ENCODE measurements at regions of chr18 and their contacts with region 1.

Region 1: GRCh38 chr18:9614401-9615279 is at the start of gene PPP4R1:
- DNase-seq: peak; percentile 84
- ATAC-seq: peak; percentile 57
- H3K4me3 Mint-ChIP-seq: peak within 1 kb of the TSS; percentile 93
- H3K27ac Mint-ChIP-seq: peak within 1 kb of the TSS; percentile 79
- H3K4me1 Mint-ChIP-seq: peaks cover 29% of the 10 kb centered on the region
- H3K27me3 Mint-ChIP-seq: no peaks in the 10 kb centered on the region
- total RNA-seq, gene PPP4R1: 32.2 to 33.3 TPM

Region 2: DNA sequence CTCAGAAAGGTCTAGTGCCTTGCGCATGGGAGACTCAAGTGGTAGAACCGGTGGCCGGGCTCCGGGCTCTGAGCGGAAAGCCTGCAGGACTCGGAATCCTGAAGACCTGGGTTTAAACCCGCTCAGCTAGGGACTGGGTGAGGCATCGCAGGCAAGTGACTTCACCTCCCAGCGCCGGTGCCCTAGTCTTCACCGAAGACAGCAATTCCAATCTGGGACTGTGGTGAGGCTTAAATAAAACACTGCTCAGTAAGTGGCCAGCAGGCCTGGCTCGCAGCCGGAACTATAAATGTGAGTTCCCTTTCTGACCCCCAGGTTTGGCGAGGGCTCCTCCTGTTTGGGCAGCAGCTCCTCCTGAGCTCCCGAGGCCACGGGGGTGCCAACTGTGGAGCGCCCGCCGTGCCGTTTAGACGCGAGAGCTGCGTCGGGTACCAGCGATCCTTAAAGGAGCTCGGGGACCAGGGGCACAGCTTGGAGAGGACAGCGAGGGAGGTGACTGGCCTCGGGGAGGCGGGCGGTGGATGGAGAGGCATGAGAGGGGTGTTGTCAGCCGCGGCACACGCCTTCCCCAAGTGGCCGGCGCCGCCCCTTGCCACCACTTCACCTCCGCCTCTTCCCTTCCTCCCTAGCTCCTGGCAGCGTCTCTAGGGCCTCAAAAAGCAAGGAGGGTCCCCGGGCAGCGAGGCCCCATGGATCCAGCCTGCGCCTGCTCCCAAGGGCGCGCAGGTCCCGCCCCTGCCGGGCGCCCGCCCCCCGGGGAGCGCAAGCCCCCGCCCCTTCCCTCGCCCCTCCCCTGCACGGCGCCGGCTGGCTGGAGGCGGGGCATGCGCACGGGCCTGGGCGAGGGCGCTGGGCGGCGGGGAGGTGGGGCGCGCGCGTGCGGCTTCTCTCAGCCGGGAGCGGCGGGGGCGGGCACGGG is 910.0 kb before region 1 on chr18:
- CTCF ChIA-PET with region 1: interaction called, 3 read pairs
- POLR2A ChIA-PET with region 1: no interaction called
- intact Hi-C with region 1: loop called in 1 of 2 experiments (anchors 1 kb)
- DNase-seq: peak; percentile 90
- ATAC-seq: peak; percentile 98
- H3K4me3 Mint-ChIP-seq: peak overlapping the region; percentile 80
- H3K27ac Mint-ChIP-seq: no peak overlapping the region
- H3K4me1 Mint-ChIP-seq: peaks cover 12% of the 10 kb centered on the region
- H3K27me3 Mint-ChIP-seq: peaks cover 47% of the 10 kb centered on the region

Region 3: GRCh38 chr18:9102508-9103375 is 511.9 kb before region 1 on chr18 and contains the start of gene NDUFV2:
- CTCF ChIA-PET with region 1: no interaction called
- POLR2A ChIA-PET with region 1: no interaction called
- intact Hi-C with region 1: loop called in 1 of 2 experiments (anchors 5 kb)
- DNase-seq: peak; percentile 99
- ATAC-seq: peak; percentile 88
- H3K4me3 Mint-ChIP-seq: peak within 1 kb of the TSS; percentile 89
- H3K27ac Mint-ChIP-seq: peak within 1 kb of the TSS; percentile 97
- H3K4me1 Mint-ChIP-seq: peaks cover 40% of the 10 kb centered on the region
- H3K27me3 Mint-ChIP-seq: no peaks in the 10 kb centered on the region
- total RNA-seq, gene NDUFV2: 331 to 372 TPM

Region 4: GRCh38 chr18:9673296-9674251 is 58.9 kb after region 1 on chr18:
- CTCF ChIA-PET with region 1: interaction called, 3 read pairs
- POLR2A ChIA-PET with region 1: interaction called, 3 read pairs
- intact Hi-C with region 1: loop called (anchors 2 to 5 kb)
- DNase-seq: peak; percentile 55
- ATAC-seq: peak; percentile 85
- H3K4me3 Mint-ChIP-seq: no peak overlapping the region
- H3K27ac Mint-ChIP-seq: no peak overlapping the region
- H3K4me1 Mint-ChIP-seq: peaks cover 9% of the 10 kb centered on the region
- H3K27me3 Mint-ChIP-seq: peaks cover 8% of the 10 kb centered on the region

Region 5: DNA sequence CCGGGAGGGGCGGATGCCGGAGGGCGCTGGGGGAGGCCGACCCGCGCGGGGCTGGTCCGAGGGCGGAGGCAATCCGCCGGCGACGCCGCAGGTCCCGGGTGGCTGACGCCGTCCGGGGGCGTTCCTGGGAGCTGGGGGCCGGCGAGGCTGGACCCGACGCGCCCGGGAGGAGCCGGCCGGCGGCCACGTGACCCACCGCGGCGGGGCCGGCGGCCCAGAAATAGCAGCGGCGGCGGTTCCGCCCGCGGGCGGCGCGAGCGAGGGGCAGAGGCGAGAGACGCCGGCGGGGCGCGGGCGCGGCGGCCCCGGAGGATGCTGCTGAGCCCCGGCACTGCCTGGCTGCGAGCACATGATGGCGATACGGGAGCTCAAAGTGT is 93.4 kb after region 1 on chr18 and contains the start of gene RAB31:
- CTCF ChIA-PET with region 1: no interaction called
- POLR2A ChIA-PET with region 1: no interaction called
- intact Hi-C with region 1: loop called (anchors 2 kb)
- DNase-seq: peak; percentile 47
- ATAC-seq: peak; percentile 34
- H3K4me3 Mint-ChIP-seq: peak within 1 kb of the TSS; percentile 76
- H3K27ac Mint-ChIP-seq: no peak within 1 kb of the TSS
- H3K4me1 Mint-ChIP-seq: peaks cover 42% of the 10 kb centered on the region
- H3K27me3 Mint-ChIP-seq: peaks cover 71% of the 10 kb centered on the region
- total RNA-seq, gene RAB31: 0.48 to 1.8 TPM

Region 6: DNA sequence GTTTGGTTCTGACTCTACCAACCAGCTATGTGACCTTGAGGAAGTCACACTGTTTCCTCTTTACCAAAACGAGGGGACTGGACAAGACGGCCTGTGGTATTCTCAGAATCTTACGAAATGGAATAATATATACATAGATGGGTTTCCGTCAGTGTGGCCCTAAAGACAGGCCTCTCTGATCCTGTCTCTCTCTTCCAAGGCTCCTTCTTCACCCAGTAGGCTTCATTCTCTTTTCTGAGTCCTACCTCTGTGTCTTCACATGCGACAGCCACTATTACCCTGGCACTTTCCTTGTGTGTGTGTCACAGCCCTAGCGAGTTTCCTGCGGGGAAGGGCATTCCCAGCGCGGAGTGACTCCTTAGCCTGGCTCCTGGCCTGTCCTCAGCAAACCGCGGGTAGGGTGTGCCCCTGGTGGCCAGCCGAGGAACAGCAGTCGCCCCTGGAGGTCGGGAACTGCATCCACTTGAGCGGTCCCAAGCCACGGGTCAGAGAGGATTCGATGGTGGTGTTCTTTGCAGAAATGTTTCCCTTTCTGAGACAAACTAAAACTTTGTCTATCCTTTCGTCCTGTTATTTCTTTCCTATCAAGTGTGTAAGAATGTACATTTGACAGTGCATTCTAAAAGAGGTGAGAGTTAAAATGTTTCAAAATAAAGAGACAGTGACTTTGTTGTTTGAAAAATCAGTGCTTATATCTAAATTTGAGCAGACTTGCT is 156.8 kb after region 1 on chr18:
- CTCF ChIA-PET with region 1: no interaction called
- POLR2A ChIA-PET with region 1: no interaction called
- intact Hi-C with region 1: loop called in 1 of 2 experiments (anchors 2 kb)
- DNase-seq: peak; percentile 80
- ATAC-seq: peak; percentile 79
- H3K4me3 Mint-ChIP-seq: no peak overlapping the region
- H3K27ac Mint-ChIP-seq: no peak overlapping the region
- H3K4me1 Mint-ChIP-seq: no peaks in the 10 kb centered on the region
- H3K27me3 Mint-ChIP-seq: peaks cover 10% of the 10 kb centered on the region

Region 7: GRCh38 chr18:10525371-10526210 is 911.0 kb after region 1 on chr18 and contains the start of gene NAPG:
- CTCF ChIA-PET with region 1: interaction called, 3 read pairs
- POLR2A ChIA-PET with region 1: no interaction called
- intact Hi-C with region 1: loop called in 1 of 2 experiments (anchors 5 kb)
- DNase-seq: peak; percentile 94
- ATAC-seq: peak; percentile 84
- H3K4me3 Mint-ChIP-seq: peak within 1 kb of the TSS; percentile 92
- H3K27ac Mint-ChIP-seq: peak within 1 kb of the TSS; percentile 96
- H3K4me1 Mint-ChIP-seq: peaks cover 49% of the 10 kb centered on the region
- H3K27me3 Mint-ChIP-seq: peaks cover 4% of the 10 kb centered on the region
- total RNA-seq, gene NAPG: 28.6 to 31.0 TPM

Measured in activated CD4-positive, alpha-beta T cell treated with anti-CD3 and anti-CD28 coated beads for 36 hours (primary cell).